Calu3 (cell line): ENCODE measurements at regions of chr2 and their contacts with region 1.

Region 1: GRCh38 chr2:238370823-238371372 is 50.6 kb downstream of the TRAF3IP1 start:
- DNase-seq: peak; percentile 83
- H3K4me3 Mint-ChIP-seq: no peak overlapping the region
- H3K27ac Mint-ChIP-seq: peak overlapping the region; percentile 68
- H3K4me1 Mint-ChIP-seq: peaks cover 13% of the 10 kb centered on the region
- H3K27me3 Mint-ChIP-seq: no peaks in the 10 kb centered on the region
- CTCF ChIP-seq: peak; percentile 88

Region 2: GRCh38 chr2:238320246-238320647 is 50.7 kb before region 1 on chr2 and contains the start of gene TRAF3IP1:
- CTCF ChIA-PET with region 1: no interaction called
- intact Hi-C with region 1: no loop called
- DNase-seq: peak; percentile 96
- H3K4me3 Mint-ChIP-seq: peak within 1 kb of the TSS; percentile 72
- H3K27ac Mint-ChIP-seq: peak within 1 kb of the TSS; percentile 85
- H3K4me1 Mint-ChIP-seq: peaks cover 9% of the 10 kb centered on the region
- H3K27me3 Mint-ChIP-seq: no peaks in the 10 kb centered on the region
- CTCF ChIP-seq: no peak
- total RNA-seq, gene TRAF3IP1: 18.6 and 21.2 TPM in 2 replicates

Region 3: DNA sequence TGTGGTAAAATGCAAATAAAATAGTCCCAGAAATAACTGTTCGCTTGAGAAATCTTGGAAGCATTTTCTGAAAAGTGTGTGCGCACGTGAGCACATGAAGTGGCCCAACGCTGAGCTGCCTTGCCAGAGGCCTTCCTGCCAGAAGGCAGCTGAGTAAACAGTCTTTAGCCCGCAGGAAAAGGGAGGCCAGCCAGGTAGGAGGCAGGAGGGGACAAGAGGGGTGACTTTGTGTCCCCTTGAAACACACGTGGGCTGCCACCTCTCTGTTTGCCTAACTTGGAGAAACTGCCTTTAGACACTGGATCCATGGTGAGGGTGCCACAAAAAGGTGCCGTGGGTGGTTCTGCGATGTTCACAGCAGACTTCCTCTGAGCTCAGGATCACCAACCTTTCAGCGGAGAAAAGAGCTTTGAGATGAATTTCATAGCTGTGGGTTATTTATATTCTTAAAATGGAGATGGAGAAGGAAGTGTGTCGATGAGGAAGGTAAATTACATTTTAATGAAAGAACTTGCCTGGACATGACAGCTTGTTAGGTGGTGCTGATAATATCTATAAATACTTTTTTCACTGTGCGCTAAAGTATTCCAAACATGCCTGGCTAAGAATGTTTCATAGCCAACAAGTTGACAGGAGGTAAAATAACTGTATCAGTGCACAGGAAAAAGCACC is 19.2 kb after region 1 on chr2:
- CTCF ChIA-PET with region 1: no interaction called
- intact Hi-C with region 1: no loop called
- DNase-seq: peak; percentile 36
- H3K4me3 Mint-ChIP-seq: no peak overlapping the region
- H3K27ac Mint-ChIP-seq: no peak overlapping the region
- H3K4me1 Mint-ChIP-seq: peaks cover 32% of the 10 kb centered on the region
- H3K27me3 Mint-ChIP-seq: no peaks in the 10 kb centered on the region
- CTCF ChIP-seq: no peak

Region 4: DNA sequence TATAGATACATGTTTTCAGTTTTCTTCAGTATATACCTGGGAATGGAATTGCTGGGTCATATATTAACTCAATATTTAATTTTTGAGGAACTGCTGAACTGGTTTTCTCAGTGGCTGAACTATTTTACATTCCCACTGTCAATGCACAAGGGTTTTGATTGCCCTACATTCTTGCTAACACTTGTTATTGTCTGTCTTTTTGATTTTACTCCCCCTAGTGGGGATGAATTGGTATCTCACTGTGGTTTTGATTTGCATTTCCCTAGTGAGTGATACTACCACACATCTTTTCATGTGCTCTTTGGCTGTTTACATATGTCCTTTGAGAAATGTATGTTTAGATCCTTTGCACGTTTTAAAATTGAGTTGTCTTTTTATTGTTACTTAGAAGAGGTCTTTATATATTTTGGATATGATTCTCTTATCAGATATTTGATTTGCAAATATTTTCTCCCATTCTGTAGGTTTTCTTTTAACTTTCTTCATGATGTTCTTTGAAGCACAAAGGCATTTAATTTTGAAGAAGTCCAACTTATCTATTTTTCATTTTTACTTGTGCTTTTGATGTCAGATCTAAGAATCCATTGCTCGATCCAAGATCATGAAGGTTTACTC is 92.0 kb after region 1 on chr2:
- CTCF ChIA-PET with region 1: interaction called, 3 read pairs
- intact Hi-C with region 1: loop called (anchors 1 kb)
- DNase-seq: peak; percentile 31
- H3K4me3 Mint-ChIP-seq: no peak overlapping the region
- H3K27ac Mint-ChIP-seq: no peak overlapping the region
- H3K4me1 Mint-ChIP-seq: no peaks in the 10 kb centered on the region
- H3K27me3 Mint-ChIP-seq: no peaks in the 10 kb centered on the region
- CTCF ChIP-seq: peak; percentile 60

Region 5: GRCh38 chr2:238615187-238615586 is 244.3 kb after region 1 on chr2:
- CTCF ChIA-PET with region 1: interaction called, 5 read pairs
- intact Hi-C with region 1: loop called (anchors 5 kb)
- DNase-seq: no peak
- H3K4me3 Mint-ChIP-seq: no peak overlapping the region
- H3K27ac Mint-ChIP-seq: no peak overlapping the region
- H3K4me1 Mint-ChIP-seq: no peaks in the 10 kb centered on the region
- H3K27me3 Mint-ChIP-seq: peaks cover 18% of the 10 kb centered on the region
- CTCF ChIP-seq: no peak